ENCODE measurements at regions of chr6 and their contacts with region 1.

Region 1: DNA sequence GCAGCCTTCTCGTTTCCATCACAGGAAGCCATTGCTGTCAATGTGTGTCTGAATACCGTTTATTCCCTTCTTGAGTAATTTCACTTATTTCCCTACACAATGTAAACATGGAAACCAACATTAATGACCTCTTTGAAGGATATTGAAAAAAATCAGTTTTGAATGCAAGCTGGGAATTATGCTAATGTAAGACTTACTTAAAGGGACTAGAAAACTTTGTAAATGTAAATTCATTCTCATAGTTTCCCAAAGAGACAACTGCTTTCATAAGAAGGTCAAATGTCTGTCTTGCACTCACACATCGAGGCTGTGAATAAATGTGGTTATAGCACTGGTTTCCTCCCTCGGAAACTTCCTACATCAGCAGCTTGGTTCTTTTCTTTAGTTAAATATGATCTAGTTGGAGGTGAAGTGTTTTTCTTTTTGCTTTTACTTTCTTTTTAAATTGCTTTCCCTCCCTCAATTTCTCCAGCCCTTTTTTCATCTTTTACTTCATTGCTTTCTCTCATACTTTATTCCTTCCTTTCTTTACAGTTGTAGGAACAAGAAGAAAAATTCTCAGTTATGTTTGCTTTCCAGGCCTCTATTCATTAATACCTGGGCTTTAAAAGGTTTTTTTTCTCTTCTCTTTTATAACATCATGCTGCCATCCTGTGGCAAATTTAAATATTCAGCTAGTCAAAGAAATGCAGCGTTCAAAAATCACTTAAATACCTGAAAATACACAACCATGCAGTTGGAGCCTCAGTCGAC is 108.3 kb downstream of the TNFAIP3 start:
- DNase-seq: no peak
- ATAC-seq: no peak
- H3K4me3 ChIP-seq: no peak overlapping the region
- H3K27ac ChIP-seq: peak overlapping the region in 1 of 10 donors; percentile 62
- H3K4me1 ChIP-seq: peaks cover 0 to 28% (median 0%) of the 10 kb centered on the region in 9 donors
- H3K27me3 ChIP-seq: no peaks in the 10 kb centered on the region
- CTCF ChIP-seq: peak in 4 of 9 donors; percentile 30 to 42 (median 38)

Region 2: DNA sequence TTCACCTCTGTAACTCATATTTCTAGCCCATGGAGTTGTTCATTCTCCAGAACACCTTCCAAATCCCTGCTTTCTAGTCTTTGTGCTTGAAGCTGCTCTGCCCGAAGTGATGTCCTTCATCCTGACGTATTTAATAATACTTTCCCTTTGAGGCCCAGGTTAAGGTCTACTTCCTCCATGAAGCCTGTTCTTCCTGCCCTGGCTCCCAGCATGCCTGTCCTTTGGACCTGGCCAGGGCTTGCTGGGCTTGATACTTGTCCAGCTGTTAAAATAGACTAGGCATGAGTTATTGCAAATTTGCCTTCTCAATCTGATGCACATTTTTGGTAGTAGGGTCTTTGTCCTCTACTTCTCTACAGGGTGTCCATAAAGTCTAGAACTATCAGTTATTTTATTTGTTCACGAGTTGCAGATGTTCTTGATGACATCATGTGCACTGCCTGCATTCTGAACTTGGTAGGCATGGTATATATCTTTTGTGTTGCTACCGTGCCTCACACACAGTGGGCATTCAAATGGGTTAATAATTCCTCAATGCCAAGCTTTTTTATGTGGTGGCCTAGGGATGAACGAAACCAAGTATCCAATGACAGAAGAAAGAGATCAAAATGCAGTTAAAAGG is 1422.1 kb before region 1 on chr6:
- intact Hi-C with region 1: no loop called
- DNase-seq: no peak
- ATAC-seq: no peak
- H3K4me3 ChIP-seq: no peak overlapping the region
- H3K27ac ChIP-seq: no peak overlapping the region
- H3K4me1 ChIP-seq: peaks cover 5 to 19% (median 15%) of the 10 kb centered on the region in 9 donors
- H3K27me3 ChIP-seq: peaks cover 8 to 34% (median 15%) of the 10 kb centered on the region in 7 donors
- CTCF ChIP-seq: no peak

Region 3: DNA sequence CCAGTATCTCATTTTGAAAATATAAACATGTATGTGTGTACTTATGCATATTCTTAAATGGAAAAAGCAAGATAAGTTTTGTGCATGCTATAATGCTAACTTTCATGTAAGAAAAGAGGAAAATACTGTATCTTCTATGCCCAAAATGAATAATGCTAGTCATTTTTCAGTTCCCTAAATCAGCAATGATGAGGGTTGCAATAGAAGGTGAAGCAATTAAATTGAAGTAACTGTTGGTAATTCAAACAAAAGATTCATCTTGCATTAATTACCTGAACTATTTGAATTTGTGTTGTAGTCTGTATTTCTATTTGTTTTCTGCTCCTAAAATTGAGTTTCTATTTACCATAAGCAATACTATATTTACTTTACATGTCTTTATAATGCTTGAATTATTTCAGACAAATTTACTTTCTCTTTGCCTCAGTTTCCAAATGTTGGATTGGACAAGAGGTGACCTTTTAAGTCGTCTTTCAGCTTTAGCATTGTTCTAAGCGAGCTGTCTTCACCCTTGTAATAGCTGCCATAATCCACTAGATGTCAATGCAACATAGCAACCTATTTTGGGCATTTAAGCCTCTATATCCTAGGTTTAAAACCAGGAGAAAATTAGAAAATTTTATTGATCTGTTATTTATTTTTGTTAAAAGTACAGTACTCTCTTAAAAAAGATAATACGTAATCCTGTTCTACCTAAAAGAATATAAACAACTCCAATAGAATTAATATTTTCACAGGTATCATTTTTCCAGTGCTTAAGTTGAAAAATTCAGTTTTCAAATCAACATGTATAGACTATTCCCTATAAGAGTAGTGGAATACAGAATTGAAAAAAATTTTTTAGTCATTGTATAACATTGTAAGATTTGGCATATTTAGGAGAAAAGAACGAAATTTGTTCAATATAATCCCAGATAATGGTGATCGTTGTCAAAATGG is 703.9 kb before region 1 on chr6:
- intact Hi-C with region 1: loop called in 1 of 10 experiments (anchors 10 kb)
- DNase-seq: no peak
- ATAC-seq: peak in 7 of 8 donors; percentile 63 to 82 (median 73)
- H3K4me3 ChIP-seq: no peak overlapping the region
- H3K27ac ChIP-seq: no peak overlapping the region
- H3K4me1 ChIP-seq: peaks cover 0 to 14% (median 0%) of the 10 kb centered on the region in 9 donors
- H3K27me3 ChIP-seq: no peaks in the 10 kb centered on the region
- CTCF ChIP-seq: peak; percentile 76 to 97 (median 93)

Measured in heart right ventricle (tissue), 16 donors.